Activated CD4-positive, alpha-beta T cell treated with anti-CD3 and anti-CD28 coated beads for 36 hours (primary cell): ENCODE measurements at regions of chr11 and their contacts with region 1.

Region 1: GRCh38 chr11:47552566-47553416 is at the start of gene CELF1:
- DNase-seq: peak; percentile 97
- ATAC-seq: peak; percentile 94
- H3K4me3 Mint-ChIP-seq: peak within 1 kb of the TSS; percentile 96
- H3K27ac Mint-ChIP-seq: peak within 1 kb of the TSS; percentile 94
- H3K4me1 Mint-ChIP-seq: peaks cover 38% of the 10 kb centered on the region
- H3K27me3 Mint-ChIP-seq: no peaks in the 10 kb centered on the region
- total RNA-seq, gene CELF1: 132 to 143 TPM

Region 2: DNA sequence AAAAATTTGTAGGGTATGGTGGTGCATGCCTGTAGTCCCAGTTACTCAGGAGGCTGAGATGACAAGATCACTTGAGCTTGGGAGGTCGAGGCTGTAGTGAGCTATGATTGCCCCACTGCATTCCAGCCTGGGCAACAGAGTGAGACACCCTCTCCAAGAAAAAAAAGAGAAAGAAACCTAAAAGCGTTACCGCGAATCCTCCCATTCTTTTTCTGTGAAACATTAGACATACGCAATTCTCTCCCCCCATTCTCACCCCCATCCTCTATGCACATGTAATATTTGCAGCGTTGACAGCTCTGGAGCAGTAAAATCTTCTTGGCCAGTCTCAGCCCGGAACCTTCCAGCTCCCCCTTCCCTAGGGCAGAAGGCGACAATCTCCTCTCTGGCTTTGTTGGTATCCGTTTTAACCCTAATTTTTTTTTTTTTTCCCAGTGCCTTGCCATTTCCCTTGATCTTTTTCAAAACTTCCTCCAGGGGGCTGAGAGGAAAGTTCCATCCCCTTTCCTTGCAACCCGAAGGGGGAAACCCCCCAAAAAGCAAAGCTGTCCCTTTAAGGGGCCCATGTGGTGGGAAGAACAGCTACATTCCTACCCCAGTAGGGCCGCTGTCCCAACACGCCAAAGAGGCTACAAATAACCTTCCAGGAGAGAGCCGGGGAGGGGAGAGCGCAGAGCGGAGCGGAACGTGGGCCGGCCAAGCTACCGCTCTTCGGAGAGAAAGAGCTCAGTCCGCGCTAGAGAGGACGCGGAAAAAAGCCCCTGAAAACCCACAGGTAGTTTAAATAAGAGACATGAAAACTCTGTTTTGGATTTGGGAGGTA is 636.3 kb before region 1 on chr11:
- CTCF ChIA-PET with region 1: no interaction called
- POLR2A ChIA-PET with region 1: no interaction called
- intact Hi-C with region 1: no loop called
- DNase-seq: peak; percentile 38
- ATAC-seq: peak; percentile 56
- H3K4me3 Mint-ChIP-seq: peak overlapping the region; percentile 62
- H3K27ac Mint-ChIP-seq: no peak overlapping the region
- H3K4me1 Mint-ChIP-seq: peaks cover 25% of the 10 kb centered on the region
- H3K27me3 Mint-ChIP-seq: peaks cover 57% of the 10 kb centered on the region

Region 3: GRCh38 chr11:47130543-47130942 is 422.2 kb before region 1 on chr11:
- CTCF ChIA-PET with region 1: no interaction called
- POLR2A ChIA-PET with region 1: no interaction called
- intact Hi-C with region 1: no loop called
- DNase-seq: no peak
- ATAC-seq: no peak
- H3K4me3 Mint-ChIP-seq: no peak overlapping the region
- H3K27ac Mint-ChIP-seq: no peak overlapping the region
- H3K4me1 Mint-ChIP-seq: no peaks in the 10 kb centered on the region
- H3K27me3 Mint-ChIP-seq: no peaks in the 10 kb centered on the region

Region 4: GRCh38 chr11:47407746-47408590 is 144.8 kb before region 1 on chr11 and contains the start of gene SLC39A13:
- CTCF ChIA-PET with region 1: interaction called, 3 read pairs
- POLR2A ChIA-PET with region 1: no interaction called
- intact Hi-C with region 1: loop called in 1 of 2 experiments (anchors 1 kb)
- DNase-seq: peak; percentile 95
- ATAC-seq: peak; percentile 91
- H3K4me3 Mint-ChIP-seq: peak within 1 kb of the TSS; percentile 89
- H3K27ac Mint-ChIP-seq: peak within 1 kb of the TSS; percentile 94
- H3K4me1 Mint-ChIP-seq: peaks cover 16% of the 10 kb centered on the region
- H3K27me3 Mint-ChIP-seq: no peaks in the 10 kb centered on the region
- total RNA-seq, gene SLC39A13: 8.6 to 10.7 TPM

Region 5: GRCh38 chr11:47509077-47509536 is 43.7 kb before region 1 on chr11:
- CTCF ChIA-PET with region 1: interaction called, 14 read pairs
- POLR2A ChIA-PET with region 1: interaction called, 5 read pairs
- intact Hi-C with region 1: loop called in 1 of 2 experiments (anchors 1 kb)
- DNase-seq: peak; percentile 16
- ATAC-seq: peak; percentile 30
- H3K4me3 Mint-ChIP-seq: peak overlapping the region; percentile 48
- H3K27ac Mint-ChIP-seq: peak overlapping the region; percentile 90
- H3K4me1 Mint-ChIP-seq: peaks cover 91% of the 10 kb centered on the region
- H3K27me3 Mint-ChIP-seq: no peaks in the 10 kb centered on the region

Region 6: GRCh38 chr11:47523468-47524225 is 29.1 kb before region 1 on chr11:
- CTCF ChIA-PET with region 1: interaction called, 7 read pairs
- POLR2A ChIA-PET with region 1: no interaction called
- intact Hi-C with region 1: loop called in 1 of 2 experiments (anchors 2 kb)
- DNase-seq: peak; percentile 67
- ATAC-seq: peak; percentile 77
- H3K4me3 Mint-ChIP-seq: peak overlapping the region; percentile 32
- H3K27ac Mint-ChIP-seq: peak overlapping the region; percentile 85
- H3K4me1 Mint-ChIP-seq: peaks cover 72% of the 10 kb centered on the region
- H3K27me3 Mint-ChIP-seq: no peaks in the 10 kb centered on the region

Region 7: DNA sequence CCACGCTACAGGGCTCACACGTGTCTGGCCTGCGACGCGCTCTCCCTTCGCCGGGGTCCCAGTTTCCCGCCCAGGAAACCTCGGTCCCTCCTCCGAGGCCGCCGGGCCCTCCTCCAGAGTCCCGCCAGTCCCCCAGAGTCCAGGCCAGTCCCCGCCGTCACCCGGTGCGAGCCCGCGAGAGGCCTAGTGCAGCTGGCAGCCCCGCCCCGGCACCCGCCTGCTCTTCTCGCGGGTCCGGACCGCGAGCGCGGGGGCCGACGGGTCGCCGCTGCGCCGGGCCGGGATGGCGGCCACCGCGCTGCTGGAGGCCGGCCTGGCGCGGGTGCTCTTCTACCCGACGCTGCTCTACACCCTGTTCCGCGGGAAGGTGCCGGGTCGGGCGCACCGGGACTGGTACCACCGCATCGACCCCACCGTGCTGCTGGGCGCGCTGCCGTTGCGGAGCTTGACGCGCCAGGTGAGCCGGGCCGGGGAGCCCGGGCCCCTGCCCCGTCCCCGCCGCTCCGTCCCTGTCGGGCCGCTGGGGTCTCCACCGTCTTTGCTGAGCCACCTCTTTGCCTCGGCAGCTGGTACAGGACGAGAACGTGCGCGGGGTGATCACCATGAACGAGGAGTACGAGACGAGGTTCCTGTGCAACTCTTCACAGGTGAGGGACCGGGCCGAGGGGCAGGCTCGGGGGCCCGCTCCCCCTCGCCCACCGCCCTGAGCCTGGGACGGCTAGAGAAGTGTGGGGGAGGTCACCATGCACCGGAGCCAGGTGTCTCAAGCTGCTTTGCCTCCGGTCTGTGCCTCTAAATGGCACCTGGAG is 12.8 kb after region 1 on chr11 and contains the start of gene PTPMT1:
- CTCF ChIA-PET with region 1: interaction called, 47 read pairs
- POLR2A ChIA-PET with region 1: no interaction called
- intact Hi-C with region 1: loop called in 1 of 2 experiments (anchors 1 kb)
- DNase-seq: peak; percentile 85
- ATAC-seq: peak; percentile 95
- H3K4me3 Mint-ChIP-seq: peak within 1 kb of the TSS; percentile 82
- H3K27ac Mint-ChIP-seq: peak within 1 kb of the TSS; percentile 82
- H3K4me1 Mint-ChIP-seq: peaks cover 28% of the 10 kb centered on the region
- H3K27me3 Mint-ChIP-seq: no peaks in the 10 kb centered on the region
- total RNA-seq, gene PTPMT1: 35.6 to 41.5 TPM

Region 8: GRCh38 chr11:47631473-47631872 is 78.7 kb after region 1 on chr11:
- CTCF ChIA-PET with region 1: no interaction called
- POLR2A ChIA-PET with region 1: no interaction called
- intact Hi-C with region 1: no loop called
- DNase-seq: no peak
- ATAC-seq: no peak
- H3K4me3 Mint-ChIP-seq: no peak overlapping the region
- H3K27ac Mint-ChIP-seq: no peak overlapping the region
- H3K4me1 Mint-ChIP-seq: no peaks in the 10 kb centered on the region
- H3K27me3 Mint-ChIP-seq: no peaks in the 10 kb centered on the region

Region 9: GRCh38 chr11:47642099-47642855 is 89.5 kb after region 1 on chr11 and contains the start of gene MTCH2:
- CTCF ChIA-PET with region 1: no interaction called
- POLR2A ChIA-PET with region 1: no interaction called
- intact Hi-C with region 1: loop called in 1 of 2 experiments (anchors 1 kb)
- DNase-seq: peak; percentile 98
- ATAC-seq: peak; percentile 94
- H3K4me3 Mint-ChIP-seq: peak within 1 kb of the TSS; percentile 99
- H3K27ac Mint-ChIP-seq: peak within 1 kb of the TSS; percentile 96
- H3K4me1 Mint-ChIP-seq: peaks cover 25% of the 10 kb centered on the region
- H3K27me3 Mint-ChIP-seq: no peaks in the 10 kb centered on the region
- total RNA-seq, gene MTCH2: 94.8 to 138 TPM

Region 10: DNA sequence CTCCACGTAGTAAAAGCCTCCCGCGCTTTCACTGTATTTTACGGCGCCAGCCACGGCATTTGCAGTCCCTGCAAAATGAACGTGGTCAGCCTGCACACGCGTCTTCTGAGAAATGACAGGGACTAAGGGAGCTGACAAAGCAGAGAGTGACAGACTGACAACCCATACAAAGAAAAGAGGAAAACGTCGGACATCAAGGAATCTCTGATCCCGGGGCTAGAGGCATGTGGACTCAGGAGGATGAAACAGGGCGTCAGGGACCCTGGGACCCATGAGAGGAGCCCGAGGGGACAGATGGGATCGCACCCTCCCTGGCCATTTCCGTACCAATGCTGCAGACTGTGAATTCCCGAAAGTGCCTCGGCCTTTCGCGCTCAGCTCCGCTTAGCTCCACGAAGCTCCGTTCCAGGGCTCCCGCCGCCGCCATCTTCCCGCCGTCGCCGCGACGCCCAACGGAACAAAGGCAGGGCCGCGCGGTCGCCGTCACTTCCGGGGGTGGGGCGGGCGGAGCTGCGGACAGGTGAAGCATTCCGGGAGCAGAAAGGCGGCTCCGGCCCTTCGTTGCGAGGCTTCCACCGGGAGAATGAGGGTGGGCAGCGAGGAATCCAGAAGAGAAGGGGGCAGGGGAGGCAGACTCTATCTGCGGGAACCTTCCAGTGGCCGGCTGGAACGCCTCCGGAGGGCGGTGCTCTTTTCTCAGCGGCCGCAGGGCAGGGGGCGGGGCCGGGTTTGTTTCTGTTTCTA is 295.3 kb after region 1 on chr11 and contains the start of gene NUP160:
- CTCF ChIA-PET with region 1: interaction called, 3 read pairs
- POLR2A ChIA-PET with region 1: interaction called, 3 read pairs
- intact Hi-C with region 1: loop called in 1 of 2 experiments (anchors 2 kb)
- DNase-seq: peak; percentile 94
- ATAC-seq: peak; percentile 88
- H3K4me3 Mint-ChIP-seq: peak within 1 kb of the TSS; percentile 90
- H3K27ac Mint-ChIP-seq: peak within 1 kb of the TSS; percentile 99
- H3K4me1 Mint-ChIP-seq: peaks cover 44% of the 10 kb centered on the region
- H3K27me3 Mint-ChIP-seq: no peaks in the 10 kb centered on the region
- total RNA-seq, gene NUP160: 67.1 to 84.5 TPM